H1 (cell line): ENCODE measurements at regions of chr1 and their contacts with region 1.

Region 1: GRCh38 chr1:64848803-64849202 is 103.9 kb downstream of the RAVER2 start:
- DNase-seq: no peak
- H3K4me3 ChIP-seq: no peak overlapping the region
- H3K27ac ChIP-seq: no peak overlapping the region
- H3K4me1 ChIP-seq: no peaks in the 10 kb centered on the region
- H3K27me3 ChIP-seq: no peaks in the 10 kb centered on the region
- CTCF ChIP-seq: no peak
- EP300 ChIP-seq: no peak
- POLR2A ChIP-seq: no peak
- RAD21 ChIP-seq: no peak

Region 2: DNA sequence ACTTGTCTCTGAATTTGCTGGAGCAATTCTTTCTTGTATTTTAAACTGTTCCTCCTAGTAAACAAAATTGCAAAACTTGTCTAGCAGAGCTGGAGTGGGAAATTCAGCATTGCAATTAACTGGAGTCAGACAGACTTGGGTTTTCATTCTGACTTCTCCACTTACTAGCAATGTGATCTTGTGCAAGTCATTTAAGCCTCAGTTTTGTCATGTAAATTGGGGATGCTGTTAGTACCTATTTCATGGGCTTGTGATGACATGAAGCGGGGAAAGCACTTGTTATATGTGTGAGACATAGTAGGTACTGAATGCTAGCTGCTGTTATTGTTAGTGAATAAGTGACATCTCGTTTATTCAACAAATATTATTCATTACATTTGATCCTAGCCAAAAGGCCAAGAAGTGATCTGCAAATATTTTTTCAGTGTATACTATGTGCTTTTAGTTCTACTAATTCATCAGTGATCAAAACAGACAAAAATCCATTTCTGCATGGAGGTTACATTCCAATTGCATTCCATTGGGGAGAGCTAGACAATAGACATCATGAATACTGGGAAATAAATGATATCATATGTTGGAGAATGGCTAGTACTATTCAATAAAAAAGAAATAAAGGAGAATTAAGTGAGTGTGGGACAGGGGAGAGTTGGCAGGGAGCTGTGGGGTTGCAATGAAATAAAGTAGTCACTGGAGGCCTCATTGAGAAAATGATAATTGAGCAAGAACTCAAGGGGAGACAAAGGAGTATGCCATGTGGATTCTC is 331.8 kb before region 1 on chr1:
- CTCF ChIA-PET with region 1: no interaction called
- POLR2A ChIA-PET with region 1: no interaction called
- DNase-seq: no peak
- H3K4me3 ChIP-seq: no peak overlapping the region
- H3K27ac ChIP-seq: no peak overlapping the region
- H3K4me1 ChIP-seq: peaks cover 4 to 32% (median 22%) of the 10 kb centered on the region in 4 experiments
- H3K27me3 ChIP-seq: peaks cover 0 to 1% (median 0%) of the 10 kb centered on the region in 4 experiments; a peak in 1 of 7 replicates
- CTCF ChIP-seq: no peak
- EP300 ChIP-seq: no peak
- POLR2A ChIP-seq: no peak
- RAD21 ChIP-seq: no peak

Region 3: GRCh38 chr1:64733581-64734286 is 115.1 kb before region 1 on chr1:
- CTCF ChIA-PET with region 1: no interaction called
- POLR2A ChIA-PET with region 1: no interaction called
- DNase-seq: no peak
- H3K4me3 ChIP-seq: no peak overlapping the region
- H3K27ac ChIP-seq: no peak overlapping the region
- H3K4me1 ChIP-seq: 0 out of 7 replicates have a peak, but pooled peaks cover 0 to 1% (median 0%) of the 10 kb centered on the region in 4 experiments
- H3K27me3 ChIP-seq: no peaks in the 10 kb centered on the region; a peak in 1 of 7 replicates
- CTCF ChIP-seq: no peak
- EP300 ChIP-seq: no peak
- POLR2A ChIP-seq: no peak
- RAD21 ChIP-seq: no peak

Region 4: GRCh38 chr1:64861611-64862010 is 12.8 kb after region 1 on chr1:
- CTCF ChIA-PET with region 1: interaction called, 10 read pairs
- POLR2A ChIA-PET with region 1: no interaction called
- DNase-seq: peak; percentile 39 to 62
- H3K4me3 ChIP-seq: no peak overlapping the region
- H3K27ac ChIP-seq: no peak overlapping the region
- H3K4me1 ChIP-seq: peaks cover 0 to 7% (median 1%) of the 10 kb centered on the region in 4 experiments; a peak in 2 of 7 replicates
- H3K27me3 ChIP-seq: no peaks in the 10 kb centered on the region
- CTCF ChIP-seq: peak; percentile 74 to 89 (median 76)
- EP300 ChIP-seq: no peak
- POLR2A ChIP-seq: no peak
- RAD21 ChIP-seq: peak; percentile 91 to 94